Stomach (tissue), 19 donors: ENCODE measurements at regions of chr3 and their contacts with region 1.

Region 1: DNA sequence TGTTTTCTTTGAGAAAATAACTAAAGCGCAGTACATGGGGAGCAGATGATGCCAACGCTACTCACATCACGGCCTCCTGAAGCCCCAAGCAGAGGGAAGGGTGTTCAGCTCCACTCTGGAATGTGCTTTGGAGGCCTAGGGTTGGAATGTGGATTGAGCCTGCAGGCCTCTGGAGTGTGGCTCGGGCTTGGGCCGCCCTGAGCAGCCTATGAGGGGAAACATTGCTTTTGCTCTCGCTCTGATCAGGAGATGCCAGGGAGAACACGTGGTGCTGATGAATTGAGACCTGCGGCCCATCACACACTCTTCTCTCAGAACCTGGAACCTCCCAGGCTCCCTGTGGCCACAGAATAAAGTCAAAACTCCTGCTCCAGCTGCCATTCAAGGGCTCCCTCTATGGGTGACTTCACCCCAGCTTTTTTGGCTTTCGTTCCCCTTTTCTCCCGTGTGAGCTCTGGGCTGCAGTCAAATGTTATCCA is 23.3 kb downstream of the CCDC13 start:
- DNase-seq: peak in 1 of 2 donors; percentile 26
- H3K4me3 ChIP-seq: no peak overlapping the region
- H3K27ac ChIP-seq: peak overlapping the region in 2 of 5 donors; percentile 13 to 80
- H3K4me1 ChIP-seq: peaks cover 23 to 60% (median 44%) of the 10 kb centered on the region in 4 donors
- H3K27me3 ChIP-seq: no peaks in the 10 kb centered on the region
- CTCF ChIP-seq: peak in 1 of 7 experiments; percentile 19
- EP300 ChIP-seq: no peak
- POLR2A ChIP-seq: no peak

Region 2: GRCh38 chr3:42652611-42653302 is 97.0 kb before region 1 on chr3:
- intact Hi-C with region 1: loop called (anchors 10 kb)
- DNase-seq: peak; percentile 75 to 81
- H3K4me3 ChIP-seq: peak overlapping the region; percentile 72 to 84 (median 81)
- H3K27ac ChIP-seq: peak overlapping the region; percentile 75 to 94 (median 91)
- H3K4me1 ChIP-seq: peaks cover 46 to 83% (median 67%) of the 10 kb centered on the region in 4 donors
- H3K27me3 ChIP-seq: no peaks in the 10 kb centered on the region
- CTCF ChIP-seq: no peak
- EP300 ChIP-seq: no peak
- POLR2A ChIP-seq: peak in 1 of 4 donors; percentile 87

Region 3: DNA sequence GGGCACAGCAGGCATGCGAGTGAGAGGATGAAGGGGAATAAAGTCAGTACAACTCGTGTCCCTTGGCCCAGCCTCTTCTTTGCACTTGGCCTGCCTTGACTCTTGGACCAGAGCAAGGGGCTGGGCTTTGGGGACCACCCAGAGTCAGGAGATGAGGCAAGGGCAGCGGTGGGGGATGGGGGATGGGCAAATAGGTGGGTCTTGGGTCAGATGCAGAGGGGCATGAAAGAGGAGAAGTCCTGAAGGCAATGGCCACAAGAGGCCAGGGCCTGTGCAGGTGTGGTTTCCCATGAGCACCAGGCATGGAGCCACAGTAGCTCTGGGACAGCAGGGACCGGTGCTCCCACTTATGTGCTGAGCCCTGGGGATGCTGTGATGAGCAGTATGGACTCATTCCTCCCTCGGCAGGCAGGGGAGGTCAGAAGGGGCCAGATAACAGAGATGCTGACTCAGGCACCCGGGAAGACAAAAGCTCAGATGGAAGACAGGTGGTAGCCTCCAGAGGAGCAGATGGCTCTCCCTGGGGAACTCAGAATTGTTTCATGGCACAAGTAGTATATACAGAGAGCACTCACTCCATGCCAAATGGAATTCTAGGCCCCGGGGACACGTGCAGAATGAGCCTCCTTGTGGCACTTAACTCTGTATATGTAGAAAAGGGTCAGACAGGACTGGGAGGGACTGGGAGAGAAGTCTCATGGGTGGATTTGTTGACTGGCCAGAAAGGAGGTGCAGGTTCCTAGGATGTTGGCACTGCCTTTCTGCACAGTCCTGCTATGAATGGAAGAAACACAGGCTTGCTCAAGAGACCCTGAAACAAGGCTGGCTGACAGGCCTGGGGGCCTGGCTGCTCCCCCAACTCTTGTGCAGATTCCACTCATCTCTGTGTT is 82.0 kb before region 1 on chr3:
- intact Hi-C with region 1: no loop called
- DNase-seq: no peak
- H3K4me3 ChIP-seq: no peak overlapping the region
- H3K27ac ChIP-seq: no peak overlapping the region
- H3K4me1 ChIP-seq: peaks cover 7 to 38% (median 21%) of the 10 kb centered on the region in 4 donors
- H3K27me3 ChIP-seq: no peaks in the 10 kb centered on the region
- CTCF ChIP-seq: no peak
- EP300 ChIP-seq: no peak
- POLR2A ChIP-seq: no peak

Region 4: GRCh38 chr3:42804106-42804830 is 54.5 kb after region 1 on chr3 and contains the start of gene HIGD1A:
- intact Hi-C with region 1: no loop called
- DNase-seq: peak; percentile 97 to 99
- H3K4me3 ChIP-seq: peak within 1 kb of the TSS; percentile 69 to 79 (median 72)
- H3K27ac ChIP-seq: peak within 1 kb of the TSS; percentile 96 to 100 (median 98)
- H3K4me1 ChIP-seq: peaks cover 28 to 54% (median 43%) of the 10 kb centered on the region in 4 donors
- H3K27me3 ChIP-seq: no peaks in the 10 kb centered on the region
- CTCF ChIP-seq: no peak
- EP300 ChIP-seq: no peak
- POLR2A ChIP-seq: peak in 2 of 4 donors; percentile 96 to 98
- total RNA-seq, gene HIGD1A: 62.0 to 313 (median 98.8) TPM

Region 5: DNA sequence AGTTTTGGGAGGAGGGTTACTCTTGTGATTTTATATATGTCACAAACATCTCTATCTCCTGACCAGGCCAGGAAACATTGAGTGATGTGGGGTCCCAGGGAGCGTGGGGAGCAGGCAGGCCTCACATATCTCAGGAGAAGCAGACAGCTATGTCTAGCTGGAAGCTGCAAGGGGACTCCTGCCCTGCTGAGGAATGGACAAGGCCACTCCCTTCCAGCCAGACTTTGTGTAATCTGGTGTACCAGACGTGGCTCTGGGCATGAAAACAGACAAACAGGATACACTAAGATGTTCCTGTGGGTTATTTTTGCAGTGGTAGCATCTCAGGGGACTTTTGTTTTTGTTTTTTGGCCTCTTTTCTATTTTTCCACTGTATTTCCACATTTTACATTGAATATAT is 102.6 kb after region 1 on chr3:
- intact Hi-C with region 1: no loop called
- DNase-seq: peak in 1 of 2 donors; percentile 47
- H3K4me3 ChIP-seq: no peak overlapping the region
- H3K27ac ChIP-seq: no peak overlapping the region
- H3K4me1 ChIP-seq: peaks cover 0 to 16% (median 0%) of the 10 kb centered on the region in 4 donors
- H3K27me3 ChIP-seq: no peaks in the 10 kb centered on the region
- CTCF ChIP-seq: no peak
- EP300 ChIP-seq: no peak
- POLR2A ChIP-seq: no peak

Region 6: GRCh38 chr3:43723121-43723734 is 973.4 kb after region 1 on chr3:
- intact Hi-C with region 1: no loop called
- DNase-seq: no peak
- H3K4me3 ChIP-seq: no peak overlapping the region
- H3K27ac ChIP-seq: peak overlapping the region in 1 of 5 donors; percentile 8
- H3K4me1 ChIP-seq: peaks cover 0 to 15% (median 3%) of the 10 kb centered on the region in 4 donors
- H3K27me3 ChIP-seq: no peaks in the 10 kb centered on the region
- CTCF ChIP-seq: no peak
- EP300 ChIP-seq: no peak
- POLR2A ChIP-seq: no peak